Left colon (tissue), 2 donors: ENCODE measurements at regions of chr4 and their contacts with region 1.

Region 1: GRCh38 chr4:165343353-165344191 is 16.1 kb downstream of the MSMO1 start:
- DNase-seq: peak in 1 of 2 donors; percentile 27
- ATAC-seq: peak; percentile 77

Region 2: GRCh38 chr4:165131247-165131832 is 212.2 kb before region 1 on chr4:
- intact Hi-C with region 1: loop called in 1 of 2 experiments (anchors 10 kb)
- DNase-seq: peak in 1 of 2 donors; percentile 68
- ATAC-seq: peak; percentile 64